Activated CD8-positive, alpha-beta T cell treated with anti-CD3 and anti-CD28 coated beads for 36 hours (primary cell): ENCODE measurements at regions of chr9 and their contacts with region 1.

Region 1: GRCh38 chr9:89701221-89701798 is 96.5 kb downstream of the GADD45G start:
- DNase-seq: peak; percentile 94
- ATAC-seq: peak; percentile 96
- H3K4me3 Mint-ChIP-seq: peak overlapping the region; percentile 82
- H3K27ac Mint-ChIP-seq: peak overlapping the region; percentile 93
- H3K4me1 Mint-ChIP-seq: peaks cover 47% of the 10 kb centered on the region
- H3K27me3 Mint-ChIP-seq: no peaks in the 10 kb centered on the region
- CTCF ChIP-seq: no peak

Region 2: DNA sequence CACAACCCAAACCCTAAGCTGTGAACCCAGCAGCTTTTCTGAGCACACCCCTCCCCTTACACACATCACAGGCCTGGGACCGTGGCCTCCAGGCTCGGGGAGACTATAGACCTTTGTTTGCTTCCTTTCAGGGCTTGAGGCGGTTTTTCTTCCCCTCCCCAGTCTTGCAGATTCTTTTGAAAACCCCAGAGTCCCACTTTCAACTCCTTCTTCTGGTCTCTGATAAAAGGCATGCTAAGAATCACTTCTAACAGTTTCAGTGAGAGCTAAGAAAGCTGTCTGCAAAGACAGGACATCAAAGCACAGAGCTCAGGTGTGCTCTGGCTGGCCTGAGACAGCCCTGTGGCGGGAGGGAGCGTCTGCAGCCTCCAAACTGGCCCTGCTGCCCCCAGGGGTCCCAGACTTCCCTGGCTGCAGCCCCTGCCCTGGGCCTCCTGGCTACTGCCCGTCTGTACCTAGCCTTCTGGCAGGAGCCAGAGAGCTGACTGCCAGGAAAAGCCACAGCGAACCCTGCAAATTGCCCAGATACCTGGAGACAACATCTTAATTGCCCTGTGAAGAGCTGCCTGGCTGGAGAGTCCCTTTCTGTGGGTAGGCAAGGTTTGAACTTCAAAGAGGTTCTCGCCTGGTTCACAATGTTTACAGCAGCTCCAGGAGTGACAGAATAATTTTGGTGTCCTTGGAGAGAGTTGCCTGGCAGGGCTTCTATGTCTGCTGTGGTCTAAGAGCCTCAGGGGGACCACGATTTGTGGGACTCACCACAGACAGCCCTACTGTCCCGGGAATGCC is 42.5 kb after region 1 on chr9:
- CTCF ChIA-PET with region 1: interaction called, 5 read pairs
- POLR2A ChIA-PET with region 1: interaction called, 5 read pairs
- intact Hi-C with region 1: loop called (anchors 5 kb)
- DNase-seq: peak; percentile 80
- ATAC-seq: peak; percentile 77
- H3K4me3 Mint-ChIP-seq: peak overlapping the region; percentile 27
- H3K27ac Mint-ChIP-seq: peak overlapping the region; percentile 87
- H3K4me1 Mint-ChIP-seq: peaks cover 70% of the 10 kb centered on the region
- H3K27me3 Mint-ChIP-seq: peaks cover 5% of the 10 kb centered on the region
- CTCF ChIP-seq: no peak

Region 3: GRCh38 chr9:89929673-89930480 is 228.6 kb after region 1 on chr9:
- CTCF ChIA-PET with region 1: no interaction called
- POLR2A ChIA-PET with region 1: no interaction called
- intact Hi-C with region 1: no loop called
- DNase-seq: peak; percentile 14
- ATAC-seq: peak; percentile 69
- H3K4me3 Mint-ChIP-seq: no peak overlapping the region
- H3K27ac Mint-ChIP-seq: peak overlapping the region; percentile 37
- H3K4me1 Mint-ChIP-seq: peaks cover 23% of the 10 kb centered on the region
- H3K27me3 Mint-ChIP-seq: peaks cover 7% of the 10 kb centered on the region
- CTCF ChIP-seq: no peak